ENCODE measurements at regions of chr12 and their contacts with region 1.

Region 1: GRCh38 chr12:27821259-27821973 is 41.4 kb upstream of the MANSC4 start:
- DNase-seq: peak; percentile 99
- ATAC-seq: peak; percentile 56
- H3K4me3 ChIP-seq: peak overlapping the region; percentile 57
- H3K27ac ChIP-seq: peak overlapping the region; percentile 95
- H3K4me1 ChIP-seq: peaks cover 37% of the 10 kb centered on the region
- H3K27me3 ChIP-seq: no peaks in the 10 kb centered on the region
- CTCF ChIP-seq: peak; percentile 95

Region 2: DNA sequence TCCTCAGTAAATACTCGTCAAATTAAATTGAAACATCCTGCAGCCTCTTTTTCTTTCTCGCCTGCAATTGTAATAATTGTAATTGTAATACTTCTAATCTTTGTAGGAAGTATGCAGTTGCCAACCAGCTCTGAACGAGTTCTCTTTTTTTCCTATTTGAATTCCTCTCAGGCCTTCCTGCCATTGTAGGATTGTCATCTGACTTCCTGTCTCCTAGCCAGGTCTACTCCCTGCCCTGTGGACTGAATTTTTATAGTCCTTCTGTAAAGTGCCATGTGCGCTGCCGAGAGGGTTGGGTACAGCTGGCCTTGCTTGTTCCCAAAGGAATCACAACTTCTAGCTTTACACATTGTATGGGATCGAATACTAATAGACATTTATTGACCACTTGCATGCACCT is 1442.7 kb before region 1 on chr12:
- CTCF ChIA-PET with region 1: no interaction called
- POLR2A ChIA-PET with region 1: no interaction called
- intact Hi-C with region 1: no loop called
- DNase-seq: no peak
- ATAC-seq: no peak
- H3K4me3 ChIP-seq: no peak overlapping the region
- H3K27ac ChIP-seq: no peak overlapping the region
- H3K4me1 ChIP-seq: no peaks in the 10 kb centered on the region
- H3K27me3 ChIP-seq: no peaks in the 10 kb centered on the region
- CTCF ChIP-seq: no peak

Region 3: GRCh38 chr12:27733052-27733656 is 88.3 kb before region 1 on chr12:
- CTCF ChIA-PET with region 1: interaction called, 25 read pairs
- POLR2A ChIA-PET with region 1: no interaction called
- intact Hi-C with region 1: loop called (anchors 1 kb)
- DNase-seq: peak; percentile 82
- ATAC-seq: peak; percentile 47
- H3K4me3 ChIP-seq: no peak overlapping the region
- H3K27ac ChIP-seq: no peak overlapping the region
- H3K4me1 ChIP-seq: 0 out of 2 replicates have a peak, but pooled peaks cover 4% of the 10 kb centered on the region
- H3K27me3 ChIP-seq: no peaks in the 10 kb centered on the region
- CTCF ChIP-seq: peak; percentile 98

Region 4: GRCh38 chr12:27747111-27747820 is 74.2 kb before region 1 on chr12:
- CTCF ChIA-PET with region 1: interaction called, 6 read pairs
- POLR2A ChIA-PET with region 1: no interaction called
- intact Hi-C with region 1: loop called (anchors 1 kb)
- DNase-seq: peak; percentile 85
- ATAC-seq: peak; percentile 86
- H3K4me3 ChIP-seq: peak overlapping the region; percentile 47
- H3K27ac ChIP-seq: peak overlapping the region; percentile 94
- H3K4me1 ChIP-seq: peaks cover 49% of the 10 kb centered on the region
- H3K27me3 ChIP-seq: no peaks in the 10 kb centered on the region
- CTCF ChIP-seq: no peak

Region 5: GRCh38 chr12:27779920-27780611 is 41.4 kb before region 1 on chr12 and contains the starts of genes KLHL42 and MANSC4:
- CTCF ChIA-PET with region 1: interaction called, 5 read pairs
- POLR2A ChIA-PET with region 1: interaction called, 8 read pairs
- intact Hi-C with region 1: loop called (anchors 1 kb)
- DNase-seq: peak; percentile 72
- ATAC-seq: peak; percentile 64
- H3K4me3 ChIP-seq: peak within 1 kb of the TSS; percentile 78
- H3K27ac ChIP-seq: peak within 1 kb of the TSS; percentile 64
- H3K4me1 ChIP-seq: peaks cover 38% of the 10 kb centered on the region
- H3K27me3 ChIP-seq: no peaks in the 10 kb centered on the region
- CTCF ChIP-seq: no peak
- total RNA-seq, gene KLHL42: 74.2 and 82.6 TPM in 2 replicates
- total RNA-seq, gene MANSC4: 1.9 and 4.1 TPM in 2 replicates

Region 6: GRCh38 chr12:27840244-27840999 is 19.0 kb after region 1 on chr12:
- CTCF ChIA-PET with region 1: interaction called, 5 read pairs
- POLR2A ChIA-PET with region 1: interaction called, 14 read pairs
- intact Hi-C with region 1: loop called (anchors 1 kb)
- DNase-seq: peak; percentile 48
- ATAC-seq: peak; percentile 30
- H3K4me3 ChIP-seq: no peak overlapping the region
- H3K27ac ChIP-seq: no peak overlapping the region
- H3K4me1 ChIP-seq: peaks cover 17% of the 10 kb centered on the region
- H3K27me3 ChIP-seq: no peaks in the 10 kb centered on the region
- CTCF ChIP-seq: peak; percentile 90

Region 7: GRCh38 chr12:27861428-27862167 is 40.2 kb after region 1 on chr12:
- CTCF ChIA-PET with region 1: no interaction called
- POLR2A ChIA-PET with region 1: no interaction called
- intact Hi-C with region 1: no loop called
- DNase-seq: no peak
- ATAC-seq: no peak
- H3K4me3 ChIP-seq: no peak overlapping the region
- H3K27ac ChIP-seq: no peak overlapping the region
- H3K4me1 ChIP-seq: no peaks in the 10 kb centered on the region
- H3K27me3 ChIP-seq: no peaks in the 10 kb centered on the region
- CTCF ChIP-seq: no peak

Region 8: GRCh38 chr12:27879708-27880107 is 58.3 kb after region 1 on chr12:
- CTCF ChIA-PET with region 1: no interaction called
- POLR2A ChIA-PET with region 1: no interaction called
- intact Hi-C with region 1: no loop called
- DNase-seq: no peak
- ATAC-seq: no peak
- H3K4me3 ChIP-seq: no peak overlapping the region
- H3K27ac ChIP-seq: no peak overlapping the region
- H3K4me1 ChIP-seq: no peaks in the 10 kb centered on the region
- H3K27me3 ChIP-seq: no peaks in the 10 kb centered on the region
- CTCF ChIP-seq: no peak

Region 9: DNA sequence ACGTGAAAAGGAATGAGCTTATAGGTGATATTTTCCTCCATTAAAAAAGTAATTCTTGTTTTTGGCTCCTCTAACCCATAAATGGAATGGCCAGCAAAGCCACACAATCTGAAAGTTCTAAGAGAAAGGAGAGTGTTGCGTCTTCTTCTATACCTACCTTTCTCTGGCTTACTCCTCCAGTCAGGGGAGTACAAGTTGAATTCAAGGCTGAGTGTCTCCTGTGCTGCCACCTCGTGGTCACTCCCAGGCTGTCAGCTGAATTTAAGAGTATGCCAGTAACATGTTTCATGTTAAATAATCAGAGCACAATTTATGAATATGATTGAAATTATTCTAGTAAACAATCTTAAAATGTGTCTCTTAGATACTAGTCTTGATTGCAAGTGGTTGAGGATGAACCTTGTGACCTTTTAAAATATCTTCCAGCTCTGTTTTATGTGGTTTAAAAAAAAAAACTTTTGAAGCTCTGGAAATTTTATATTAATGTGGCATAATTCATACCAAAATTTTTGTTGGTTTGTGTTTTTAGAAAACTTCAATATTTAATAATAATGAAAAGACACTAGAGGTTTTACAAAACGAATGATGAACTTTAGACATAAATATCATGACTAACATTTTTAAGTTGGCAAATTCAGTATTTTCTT is 119.5 kb after region 1 on chr12:
- CTCF ChIA-PET with region 1: no interaction called
- POLR2A ChIA-PET with region 1: no interaction called
- intact Hi-C with region 1: loop called (anchors 5 kb)
- DNase-seq: peak; percentile 96
- ATAC-seq: peak; percentile 100
- H3K4me3 ChIP-seq: no peak overlapping the region
- H3K27ac ChIP-seq: no peak overlapping the region
- H3K4me1 ChIP-seq: no peaks in the 10 kb centered on the region
- H3K27me3 ChIP-seq: no peaks in the 10 kb centered on the region
- CTCF ChIP-seq: peak; percentile 99

Region 10: GRCh38 chr12:27946421-27946820 is 125.0 kb after region 1 on chr12:
- CTCF ChIA-PET with region 1: interaction called, 16 read pairs
- POLR2A ChIA-PET with region 1: no interaction called
- intact Hi-C with region 1: loop called (anchors 5 kb)
- DNase-seq: no peak
- ATAC-seq: no peak
- H3K4me3 ChIP-seq: no peak overlapping the region
- H3K27ac ChIP-seq: no peak overlapping the region
- H3K4me1 ChIP-seq: no peaks in the 10 kb centered on the region
- H3K27me3 ChIP-seq: no peaks in the 10 kb centered on the region
- CTCF ChIP-seq: no peak

Region 11: DNA sequence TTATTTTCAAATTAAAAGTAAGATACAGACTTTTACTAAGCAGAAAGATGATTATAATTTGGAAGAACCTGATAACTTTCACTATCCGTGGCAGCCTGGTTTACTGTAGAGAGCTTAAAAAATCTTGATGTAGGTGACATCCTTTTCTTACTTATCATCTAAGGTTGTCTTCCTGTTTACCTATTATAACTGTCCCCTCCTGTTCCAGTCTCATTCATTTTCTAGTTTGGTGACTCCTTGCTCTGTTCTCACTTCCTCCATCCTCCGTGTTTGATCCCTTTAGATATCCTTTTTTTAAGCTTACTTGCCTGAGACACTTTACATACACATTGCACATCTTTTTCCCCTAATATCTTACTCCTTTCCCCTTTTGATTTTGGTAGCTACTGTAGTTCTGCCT is 396.4 kb after region 1 on chr12:
- CTCF ChIA-PET with region 1: no interaction called
- POLR2A ChIA-PET with region 1: no interaction called
- intact Hi-C with region 1: no loop called
- DNase-seq: no peak
- ATAC-seq: no peak
- H3K4me3 ChIP-seq: no peak overlapping the region
- H3K27ac ChIP-seq: no peak overlapping the region
- H3K4me1 ChIP-seq: no peaks in the 10 kb centered on the region
- H3K27me3 ChIP-seq: no peaks in the 10 kb centered on the region
- CTCF ChIP-seq: no peak

Measured in PC-3 (cell line).